Activated CD4-positive, alpha-beta memory T cell treated with anti-CD3 and anti-CD28 coated beads for 36 hours (primary cell): ENCODE measurements at regions of chr6 and their contacts with region 1.

Region 1: DNA sequence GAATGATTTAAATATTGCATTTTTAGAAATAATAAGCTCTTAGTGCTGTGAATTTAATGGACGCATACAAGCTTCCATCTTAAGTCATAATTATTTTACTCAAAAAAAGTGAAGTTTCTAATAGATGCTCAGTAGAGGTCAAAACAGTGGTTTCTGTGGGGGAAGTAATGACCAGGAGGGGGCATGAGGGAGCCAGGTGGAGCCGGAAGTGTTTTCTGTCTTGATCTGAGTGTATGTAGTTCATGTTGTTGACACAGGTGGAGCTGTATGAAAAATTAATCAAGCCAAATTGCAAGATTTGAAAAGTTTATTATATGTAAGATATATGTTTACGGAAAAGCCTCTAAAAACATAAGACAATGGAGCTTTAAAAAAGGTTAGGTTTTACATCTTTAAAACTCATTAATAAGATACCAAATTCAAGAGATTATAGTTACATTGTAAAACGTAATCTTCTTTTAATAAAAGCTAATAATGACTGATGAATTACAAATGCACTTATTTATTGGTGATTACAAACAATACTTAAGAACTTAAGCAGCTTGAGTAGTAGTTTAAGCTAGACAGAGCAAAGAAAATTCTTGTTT is 68.0 kb downstream of the PLAGL1 start:
- DNase-seq: peak; percentile 70
- H3K4me3 Mint-ChIP-seq: no peak overlapping the region
- H3K27ac Mint-ChIP-seq: no peak overlapping the region
- H3K4me1 Mint-ChIP-seq: peaks cover 2% of the 10 kb centered on the region
- H3K27me3 Mint-ChIP-seq: peaks cover 2% of the 10 kb centered on the region

Region 2: DNA sequence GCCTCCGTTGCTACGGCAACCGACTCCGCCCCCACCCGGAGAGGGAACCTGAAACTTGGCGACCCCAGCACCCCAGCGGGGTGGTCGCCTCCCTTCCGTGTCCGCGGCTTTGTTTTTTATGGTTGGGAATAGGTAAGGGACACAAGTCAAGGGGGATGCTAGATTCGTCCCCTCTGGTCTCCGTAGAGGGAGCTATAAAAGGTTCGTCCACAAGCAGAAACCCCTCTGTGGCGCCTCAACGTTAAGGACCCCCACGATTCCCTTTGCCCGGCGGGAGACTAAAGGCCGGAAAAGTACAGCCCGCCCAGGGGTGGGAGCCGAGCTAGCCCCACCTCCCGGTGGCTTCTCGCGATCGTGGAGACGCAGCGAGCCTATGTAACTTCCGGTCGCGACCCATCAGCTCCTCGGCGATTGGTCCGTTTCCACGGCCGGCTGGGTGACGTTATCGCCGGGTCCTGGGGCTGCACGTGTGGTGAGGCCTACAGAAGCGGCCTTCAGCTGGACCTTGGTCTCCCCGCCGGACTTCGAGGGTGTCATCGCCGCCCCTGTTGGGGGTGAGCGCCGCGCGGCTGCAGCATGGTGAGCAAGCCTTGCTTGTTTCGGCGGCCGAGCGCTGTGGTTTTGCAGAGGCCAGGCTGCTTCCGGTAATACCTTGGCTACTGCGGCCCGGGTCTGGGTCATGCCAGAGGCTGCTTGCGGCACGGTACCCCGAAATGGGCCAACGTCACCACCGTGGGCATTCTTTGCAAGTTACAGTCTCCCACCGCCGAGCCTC is 97.0 kb before region 1 on chr6 and contains the start of gene LTV1:
- CTCF ChIA-PET with region 1: interaction called, 14 read pairs
- POLR2A ChIA-PET with region 1: no interaction called
- intact Hi-C with region 1: no loop called
- DNase-seq: peak; percentile 96
- H3K4me3 Mint-ChIP-seq: peak within 1 kb of the TSS; percentile 93
- H3K27ac Mint-ChIP-seq: peak within 1 kb of the TSS; percentile 93
- H3K4me1 Mint-ChIP-seq: peaks cover 25% of the 10 kb centered on the region
- H3K27me3 Mint-ChIP-seq: no peaks in the 10 kb centered on the region
- total RNA-seq, gene LTV1: 33.5 to 35.4 TPM

Region 3: GRCh38 chr6:143955971-143956370 is 15.9 kb after region 1 on chr6:
- CTCF ChIA-PET with region 1: interaction called, 25 read pairs
- POLR2A ChIA-PET with region 1: no interaction called
- intact Hi-C with region 1: no loop called
- DNase-seq: no peak
- H3K4me3 Mint-ChIP-seq: no peak overlapping the region
- H3K27ac Mint-ChIP-seq: no peak overlapping the region
- H3K4me1 Mint-ChIP-seq: no peaks in the 10 kb centered on the region
- H3K27me3 Mint-ChIP-seq: no peaks in the 10 kb centered on the region

Region 4: DNA sequence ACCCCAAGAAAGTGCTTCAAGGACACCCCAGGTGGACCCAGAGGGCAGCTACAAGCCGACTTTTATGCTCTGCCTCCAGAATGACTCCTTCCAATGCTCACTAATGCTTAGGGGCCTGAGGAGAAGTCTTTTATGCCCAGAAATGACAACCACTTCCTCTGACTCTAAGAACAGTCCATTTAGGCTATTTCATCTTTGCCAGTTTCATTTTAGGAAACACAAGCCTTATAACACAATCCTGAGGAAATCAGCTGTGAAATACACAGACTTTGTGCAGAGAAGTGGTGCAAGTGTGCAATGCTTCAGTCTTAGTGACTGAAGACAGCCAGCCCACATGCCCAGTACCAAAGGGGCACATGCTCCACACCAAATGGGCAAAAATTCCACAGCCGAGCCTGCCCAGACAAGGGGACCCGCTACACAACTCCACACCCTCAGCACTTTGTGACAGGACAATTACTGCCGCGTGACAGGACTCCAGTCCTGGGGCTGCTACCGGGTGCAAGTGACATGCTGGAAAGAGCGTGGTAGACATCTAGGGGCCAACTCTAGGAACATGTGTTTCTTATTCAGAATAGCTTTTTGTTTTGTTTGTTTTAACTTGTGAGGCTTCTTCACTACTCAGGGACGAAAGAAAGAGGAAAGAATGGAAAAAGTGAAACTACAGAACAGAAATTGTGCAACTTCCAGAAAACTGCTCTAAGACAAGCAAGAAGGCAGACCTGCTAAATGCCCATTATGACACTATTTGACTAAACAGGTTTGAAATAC is 96.1 kb after region 1 on chr6:
- CTCF ChIA-PET with region 1: interaction called, 5 read pairs
- POLR2A ChIA-PET with region 1: no interaction called
- intact Hi-C with region 1: loop called (anchors 1 kb)
- DNase-seq: peak; percentile 28
- H3K4me3 Mint-ChIP-seq: no peak overlapping the region
- H3K27ac Mint-ChIP-seq: no peak overlapping the region
- H3K4me1 Mint-ChIP-seq: peaks cover 11% of the 10 kb centered on the region
- H3K27me3 Mint-ChIP-seq: no peaks in the 10 kb centered on the region

Region 5: DNA sequence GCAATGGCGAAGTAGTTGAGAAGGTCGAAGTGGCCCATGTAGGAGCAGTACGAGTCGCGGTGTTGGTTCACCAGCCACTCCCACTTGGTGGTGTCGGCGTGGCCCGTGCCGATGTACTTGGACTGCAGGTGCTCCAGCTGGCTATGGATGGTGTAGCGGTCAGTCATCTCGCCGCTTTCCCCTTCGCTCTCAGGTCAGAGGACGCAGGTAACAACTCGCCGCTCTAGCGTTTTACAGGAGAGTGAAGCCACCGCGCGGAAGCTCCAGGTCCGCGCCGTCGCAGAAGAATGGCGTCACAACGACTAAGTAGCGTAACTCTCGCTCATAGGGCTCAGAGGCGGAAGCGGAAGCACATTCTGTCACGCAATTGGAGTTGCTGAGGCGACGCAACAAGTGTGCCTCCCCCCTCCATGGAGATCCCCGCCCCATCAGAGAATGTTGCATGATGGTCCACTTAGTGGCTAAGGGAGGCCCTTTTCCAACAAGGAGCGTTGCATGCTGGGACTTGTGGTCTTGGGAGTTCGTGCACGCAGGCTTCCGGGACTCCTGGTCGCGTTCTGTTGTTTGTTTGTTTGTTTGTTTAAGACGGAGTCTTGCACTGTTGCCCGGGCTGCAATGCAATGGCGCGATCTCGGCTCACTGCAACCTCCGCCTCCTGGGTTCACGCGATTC is 155.4 kb after region 1 on chr6 and contains the start of gene SF3B5:
- CTCF ChIA-PET with region 1: interaction called, 10 read pairs
- POLR2A ChIA-PET with region 1: no interaction called
- intact Hi-C with region 1: loop called (anchors 1 kb)
- DNase-seq: peak; percentile 99
- H3K4me3 Mint-ChIP-seq: peak within 1 kb of the TSS; percentile 93
- H3K27ac Mint-ChIP-seq: peak within 1 kb of the TSS; percentile 96
- H3K4me1 Mint-ChIP-seq: peaks cover 25% of the 10 kb centered on the region
- H3K27me3 Mint-ChIP-seq: no peaks in the 10 kb centered on the region
- total RNA-seq, gene SF3B5: 162 to 171 TPM